GM12878 (cell line): ENCODE measurements at regions of chr16 and their contacts with region 1.

Region 1: GRCh38 chr16:85114909-85115567 is 2.8 kb upstream of the CIBAR2 start:
- DNase-seq: peak; percentile 56
- ATAC-seq: peak; percentile 95
- H3K4me3 ChIP-seq: no peak overlapping the region
- H3K27ac ChIP-seq: peak overlapping the region; percentile 42; the same call in 1 of the 2 replicates
- H3K4me1 ChIP-seq: peaks cover 2% of the 10 kb centered on the region; the same call in 1 of the 2 replicates
- H3K27me3 ChIP-seq: no peaks in the 10 kb centered on the region
- CTCF ChIP-seq: peak; percentile 98 to 99 (median 99)
- EP300 ChIP-seq: no peak
- POLR2A ChIP-seq: no peak
- RAD21 ChIP-seq: peak; percentile 99

Region 2: GRCh38 chr16:85062861-85063260 is 52.2 kb before region 1 on chr16:
- CTCF ChIA-PET with region 1: no interaction called
- POLR2A ChIA-PET with region 1: no interaction called
- RAD21 ChIA-PET with region 1: no interaction called
- SMC1A ChIA-PET with region 1: no interaction called
- in situ Hi-C with region 1: no loop called
- intact Hi-C with region 1: no loop called
- DNase-seq: no peak
- ATAC-seq: no peak
- H3K4me3 ChIP-seq: no peak overlapping the region
- H3K27ac ChIP-seq: no peak overlapping the region
- H3K4me1 ChIP-seq: peaks cover 17% of the 10 kb centered on the region
- H3K27me3 ChIP-seq: no peaks in the 10 kb centered on the region
- CTCF ChIP-seq: no peak
- EP300 ChIP-seq: no peak
- POLR2A ChIP-seq: no peak
- RAD21 ChIP-seq: no peak

Region 3: GRCh38 chr16:85104821-85105391 is 10.1 kb before region 1 on chr16:
- CTCF ChIA-PET with region 1: interaction called, 17 read pairs
- POLR2A ChIA-PET with region 1: no interaction called
- RAD21 ChIA-PET with region 1: interaction called, 6 read pairs
- SMC1A ChIA-PET with region 1: interaction called, 10 read pairs
- in situ Hi-C with region 1: no loop called
- intact Hi-C with region 1: no loop called
- DNase-seq: peak; percentile 21
- ATAC-seq: peak; percentile 79
- H3K4me3 ChIP-seq: no peak overlapping the region
- H3K27ac ChIP-seq: no peak overlapping the region
- H3K4me1 ChIP-seq: peaks cover 34% of the 10 kb centered on the region
- H3K27me3 ChIP-seq: no peaks in the 10 kb centered on the region
- CTCF ChIP-seq: no peak
- EP300 ChIP-seq: no peak
- POLR2A ChIP-seq: no peak
- RAD21 ChIP-seq: no peak

Region 4: GRCh38 chr16:85151603-85152413 is 36.8 kb after region 1 on chr16:
- CTCF ChIA-PET with region 1: interaction called, 9 read pairs
- POLR2A ChIA-PET with region 1: no interaction called
- RAD21 ChIA-PET with region 1: interaction called, 16 read pairs
- SMC1A ChIA-PET with region 1: no interaction called
- in situ Hi-C with region 1: no loop called
- intact Hi-C with region 1: no loop called
- DNase-seq: no peak
- ATAC-seq: peak; percentile 84
- H3K4me3 ChIP-seq: no peak overlapping the region
- H3K27ac ChIP-seq: no peak overlapping the region
- H3K4me1 ChIP-seq: 0 out of 2 replicates have a peak, but pooled peaks cover 2% of the 10 kb centered on the region
- H3K27me3 ChIP-seq: no peaks in the 10 kb centered on the region
- CTCF ChIP-seq: no peak
- EP300 ChIP-seq: no peak
- POLR2A ChIP-seq: no peak
- RAD21 ChIP-seq: no peak

Region 5: DNA sequence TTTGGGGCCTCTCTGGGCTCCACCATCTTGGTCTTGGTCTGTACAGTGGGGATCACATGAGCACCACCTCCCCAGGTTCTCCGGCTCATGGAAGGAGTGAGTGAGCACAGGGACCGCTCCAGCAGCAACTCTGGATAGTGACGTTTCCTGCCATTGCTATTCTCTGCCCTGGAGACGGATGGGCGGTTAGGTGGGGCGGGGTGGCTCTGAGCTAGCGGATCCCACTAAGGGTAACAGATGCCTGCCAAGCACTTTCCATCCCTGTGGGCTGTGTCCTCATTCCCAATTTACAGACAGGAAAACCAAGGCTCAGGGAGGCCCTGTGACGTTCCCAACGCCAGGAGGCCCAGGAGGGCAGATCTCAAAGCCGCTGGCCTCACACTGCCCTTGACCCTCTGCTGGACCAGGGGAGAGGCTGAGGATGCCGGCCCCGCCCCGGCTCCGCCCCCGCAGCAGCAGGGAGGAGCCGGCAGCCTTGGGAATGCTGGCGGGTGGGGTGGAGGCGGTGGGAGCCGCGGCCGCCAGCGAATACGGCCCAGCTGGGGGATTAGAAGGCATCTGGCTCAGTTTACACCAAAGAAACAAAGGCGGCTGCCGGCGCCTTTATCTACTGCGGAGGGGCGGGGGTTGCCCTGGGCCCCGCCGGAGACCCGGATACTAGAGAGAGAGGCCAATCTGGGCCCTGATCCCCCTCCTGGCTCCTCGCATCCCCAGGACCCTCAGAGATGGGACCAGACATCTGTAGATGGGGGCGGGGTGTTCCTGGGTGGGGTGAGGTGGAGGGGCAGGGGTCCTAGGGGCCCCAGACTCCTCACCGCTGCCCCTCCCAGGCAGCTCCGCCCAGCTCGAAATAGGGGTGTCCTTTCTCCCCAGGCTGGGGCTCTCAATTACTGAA is 119.5 kb after region 1 on chr16:
- CTCF ChIA-PET with region 1: interaction called, 13 read pairs
- POLR2A ChIA-PET with region 1: no interaction called
- RAD21 ChIA-PET with region 1: interaction called, 7 read pairs
- SMC1A ChIA-PET with region 1: interaction called, 4 read pairs
- in situ Hi-C with region 1: no loop called
- intact Hi-C with region 1: no loop called
- DNase-seq: no peak
- ATAC-seq: no peak
- H3K4me3 ChIP-seq: no peak overlapping the region
- H3K27ac ChIP-seq: no peak overlapping the region
- H3K4me1 ChIP-seq: peaks cover 11% of the 10 kb centered on the region
- H3K27me3 ChIP-seq: no peaks in the 10 kb centered on the region
- CTCF ChIP-seq: no peak
- EP300 ChIP-seq: no peak
- POLR2A ChIP-seq: no peak
- RAD21 ChIP-seq: no peak

Region 6: DNA sequence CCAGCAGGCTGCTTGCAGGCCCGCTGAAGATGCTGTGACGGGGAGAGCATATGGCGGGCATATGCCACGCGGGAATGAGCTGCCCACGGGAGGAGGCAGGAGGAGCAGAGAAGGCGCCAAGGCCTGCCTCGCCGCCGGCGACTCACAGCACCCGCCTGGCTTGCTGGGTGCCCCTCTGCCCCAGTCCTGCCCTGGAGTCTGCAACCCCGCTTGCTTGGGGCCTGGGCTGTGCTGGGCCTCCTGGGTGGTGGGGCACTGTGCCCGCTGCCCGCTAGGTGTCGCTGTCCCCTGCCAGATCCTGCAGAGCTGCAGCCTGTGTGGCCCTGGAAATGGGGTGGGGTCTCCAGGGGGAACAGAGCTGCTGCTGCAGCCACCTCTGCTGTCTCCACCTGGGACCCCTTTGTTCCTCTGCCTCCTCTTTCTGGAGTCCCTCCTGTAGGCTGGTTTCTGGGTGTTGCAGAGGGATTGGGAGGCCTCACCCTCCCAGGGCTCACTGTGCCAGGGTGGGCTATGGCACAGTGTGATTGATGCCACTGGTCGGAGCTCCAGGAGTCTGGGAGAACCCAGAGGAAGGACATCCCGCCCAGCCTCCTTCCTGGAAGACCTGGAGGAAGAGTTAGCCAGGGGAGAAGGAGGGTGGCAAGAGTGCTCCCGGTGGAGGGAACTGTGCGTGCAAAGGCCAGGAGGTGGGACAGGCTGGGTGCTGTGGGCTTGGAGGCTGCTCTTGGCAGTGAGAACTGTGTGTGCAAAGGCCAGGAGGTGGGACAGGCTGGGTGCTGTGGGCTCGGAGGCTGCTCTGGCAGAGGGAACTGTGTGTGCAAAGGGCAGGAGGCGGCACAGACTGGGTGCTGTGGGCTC is 138.3 kb after region 1 on chr16:
- CTCF ChIA-PET with region 1: interaction called, 28 read pairs
- POLR2A ChIA-PET with region 1: no interaction called
- RAD21 ChIA-PET with region 1: interaction called, 7 read pairs
- SMC1A ChIA-PET with region 1: interaction called, 10 read pairs
- in situ Hi-C with region 1: no loop called
- intact Hi-C with region 1: loop called (anchors 5 kb)
- DNase-seq: no peak
- ATAC-seq: peak; percentile 97
- H3K4me3 ChIP-seq: no peak overlapping the region
- H3K27ac ChIP-seq: no peak overlapping the region
- H3K4me1 ChIP-seq: peaks cover 3% of the 10 kb centered on the region; the same call in 1 of the 2 replicates
- H3K27me3 ChIP-seq: peaks cover 3 to 5% of the 10 kb centered on the region in 2 experiments; a peak in 3 of 4 replicates
- CTCF ChIP-seq: peak; percentile 88 to 98 (median 93)
- EP300 ChIP-seq: no peak
- POLR2A ChIP-seq: no peak
- RAD21 ChIP-seq: peak; percentile 50

Region 7: DNA sequence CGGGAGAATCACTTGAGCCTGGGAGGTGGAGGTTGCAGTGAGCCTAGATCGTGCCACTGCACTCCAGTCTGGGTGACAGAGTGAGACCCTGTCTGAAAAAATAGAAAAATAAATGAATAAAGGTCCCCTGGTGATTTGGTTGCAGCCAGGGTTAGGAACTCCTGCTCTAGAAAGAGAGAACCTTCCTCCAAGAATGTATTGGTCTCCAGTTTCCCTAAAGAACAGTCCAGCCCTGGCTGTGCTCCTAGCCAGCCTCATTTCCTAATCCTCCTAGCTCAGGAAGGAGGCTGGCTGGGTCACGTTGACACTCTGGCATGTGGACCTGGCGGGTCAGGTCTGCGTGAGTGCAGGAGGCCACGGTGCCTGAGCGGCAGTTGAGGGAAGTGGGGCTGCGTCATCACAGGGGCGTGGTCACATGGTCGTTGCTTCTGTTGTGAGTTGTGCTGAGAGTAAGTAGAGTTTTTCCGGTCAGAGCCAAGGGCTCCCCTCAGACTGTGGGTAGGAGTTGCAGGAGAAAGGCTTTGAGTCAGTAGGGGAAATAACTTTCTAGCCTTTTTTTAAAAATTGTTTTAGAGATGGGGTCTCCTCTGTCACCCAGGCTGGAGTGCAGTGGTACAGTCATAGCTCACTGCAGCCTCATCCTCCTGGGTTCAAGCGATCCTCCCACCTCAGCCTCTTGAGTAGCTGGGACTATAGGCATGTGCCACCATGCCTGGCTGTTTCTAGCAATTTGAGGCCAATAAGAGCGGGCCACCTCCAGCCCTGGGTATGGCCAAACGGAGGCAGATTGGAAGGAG is 191.2 kb after region 1 on chr16:
- CTCF ChIA-PET with region 1: interaction called, 9 read pairs
- POLR2A ChIA-PET with region 1: no interaction called
- RAD21 ChIA-PET with region 1: interaction called, 7 read pairs
- SMC1A ChIA-PET with region 1: interaction called, 4 read pairs
- in situ Hi-C with region 1: no loop called
- intact Hi-C with region 1: loop called (anchors 1 kb)
- DNase-seq: peak; percentile 30
- ATAC-seq: peak; percentile 69
- H3K4me3 ChIP-seq: no peak overlapping the region
- H3K27ac ChIP-seq: no peak overlapping the region
- H3K4me1 ChIP-seq: peaks cover 22% of the 10 kb centered on the region
- H3K27me3 ChIP-seq: peaks cover 0 to 2% of the 10 kb centered on the region in 2 experiments; a peak in 1 of 4 replicates
- CTCF ChIP-seq: no peak
- EP300 ChIP-seq: no peak
- POLR2A ChIP-seq: no peak; the same call in 1 of the 2 replicates
- RAD21 ChIP-seq: no peak

Region 8: GRCh38 chr16:85428168-85428898 is 313.3 kb after region 1 on chr16:
- CTCF ChIA-PET with region 1: interaction called, 8 read pairs
- POLR2A ChIA-PET with region 1: no interaction called
- RAD21 ChIA-PET with region 1: interaction called, 5 read pairs
- SMC1A ChIA-PET with region 1: no interaction called
- in situ Hi-C with region 1: no loop called
- intact Hi-C with region 1: loop called (anchors 1 kb)
- DNase-seq: no peak
- ATAC-seq: peak; percentile 99
- H3K4me3 ChIP-seq: no peak overlapping the region
- H3K27ac ChIP-seq: no peak overlapping the region
- H3K4me1 ChIP-seq: no peaks in the 10 kb centered on the region
- H3K27me3 ChIP-seq: peaks cover 0 to 3% of the 10 kb centered on the region in 2 experiments; a peak in 2 of 4 replicates
- CTCF ChIP-seq: peak; percentile 61 to 66 (median 62)
- EP300 ChIP-seq: no peak
- POLR2A ChIP-seq: no peak
- RAD21 ChIP-seq: 0 out of 2 replicates have a peak, but pooled peaks have one; percentile 25